Dorsolateral prefrontal cortex (tissue), 120 donors: ENCODE measurements at regions of chr12 and their contacts with region 1.

Region 1: DNA sequence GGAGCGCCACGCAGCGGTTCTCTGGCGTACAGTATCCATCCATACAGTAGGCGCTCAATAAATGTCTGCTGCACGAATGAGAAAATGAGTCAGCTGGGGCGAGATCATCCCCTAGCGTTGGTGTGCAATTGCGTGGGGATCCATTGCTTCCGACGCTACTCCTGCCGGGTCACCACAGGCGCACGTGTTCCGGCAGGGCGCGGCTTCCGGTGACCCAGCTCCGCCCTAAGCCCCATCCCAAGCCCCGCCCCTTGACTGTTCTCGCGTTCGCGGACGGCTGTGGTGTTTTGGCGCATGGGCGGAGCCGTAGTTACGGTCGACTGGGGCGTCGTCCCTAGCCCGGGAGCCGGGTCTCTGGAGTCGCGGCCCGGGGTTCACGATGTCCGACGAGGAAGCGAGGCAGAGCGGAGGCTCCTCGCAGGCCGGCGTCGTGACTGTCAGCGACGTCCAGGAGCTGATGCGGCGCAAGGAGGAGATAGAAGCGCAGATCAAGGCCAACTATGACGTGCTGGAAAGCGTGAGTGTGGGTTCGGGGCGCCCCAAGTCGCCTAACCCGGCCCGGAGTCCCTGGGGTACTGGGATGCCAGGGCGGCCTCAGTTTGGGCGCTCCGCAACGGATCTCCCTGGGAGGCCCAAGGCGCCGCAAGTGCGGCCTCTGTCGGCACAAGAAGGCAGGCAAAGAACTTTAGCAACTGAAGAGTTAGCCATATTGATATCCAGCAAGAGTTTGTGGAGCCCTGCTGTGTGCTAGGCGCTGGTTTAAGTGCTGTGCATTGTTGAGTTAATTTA is at the start of gene PSMD9:
- DNase-seq: peak; percentile 93 to 98 (median 96)
- H3K4me3 ChIP-seq: peak within 1 kb of the TSS; percentile 67 to 100 (median 91)
- H3K27ac ChIP-seq: peak within 1 kb of the TSS; percentile 73 to 99 (median 91)
- H3K27me3 ChIP-seq: no peaks in the 10 kb centered on the region
- CTCF ChIP-seq: peak; percentile 18 to 71 (median 52)
- total RNA-seq, gene PSMD9: 20.7 to 47.0 (median 32.4) TPM

Region 2: GRCh38 chr12:121697098-121697698 is 191.5 kb before region 1 on chr12:
- intact Hi-C with region 1: loop called (anchors 2 to 10 kb)
- DNase-seq: peak in 1 of 10 donors; percentile 27
- H3K4me3 ChIP-seq: peak overlapping the region in 4 of 59 donors; percentile 12 to 24 (median 16)
- H3K27ac ChIP-seq: no peak overlapping the region
- H3K27me3 ChIP-seq: peaks cover 0 to 3% (median 0%) of the 10 kb centered on the region in 45 donors
- CTCF ChIP-seq: peak; percentile 51 to 91 (median 79)

Region 3: DNA sequence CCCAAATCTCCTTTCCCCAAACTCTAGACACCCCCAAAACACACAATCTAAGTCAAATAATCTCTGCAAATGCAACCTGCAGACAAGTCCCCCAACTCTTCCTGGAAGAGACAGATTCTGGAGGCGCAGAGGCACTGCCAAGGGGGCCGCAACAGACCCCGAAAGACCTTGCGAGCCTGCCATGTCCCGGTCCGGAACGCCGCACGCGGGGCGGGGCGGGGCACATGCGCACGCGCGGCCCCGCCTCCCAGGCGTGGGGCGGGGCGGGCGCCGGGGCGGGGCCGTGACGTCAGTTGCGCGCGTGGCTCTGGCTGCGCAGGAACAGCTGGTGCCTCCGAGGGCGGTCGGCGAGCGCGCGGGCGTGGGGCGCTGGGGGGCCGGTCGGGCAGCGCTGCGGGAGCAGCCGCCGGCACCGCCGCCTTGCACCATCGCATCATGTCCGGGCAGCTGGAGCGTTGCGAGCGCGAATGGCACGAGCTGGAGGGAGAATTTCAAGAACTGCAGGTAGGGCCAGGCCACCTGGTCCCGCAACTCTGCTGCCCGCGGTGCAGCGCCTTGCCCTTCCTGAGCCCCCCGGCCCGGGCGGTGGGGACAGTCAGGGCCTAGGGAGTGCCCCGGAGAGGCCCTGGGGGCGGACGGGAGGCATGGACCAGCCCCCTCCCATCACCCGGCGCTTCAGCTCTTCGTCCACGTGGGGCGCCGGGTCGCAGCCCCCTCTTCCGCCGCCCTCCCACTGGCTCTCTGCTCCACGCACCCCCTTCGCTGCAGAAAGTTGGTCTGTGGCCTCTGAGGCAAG is 176.0 kb before region 1 on chr12 and contains the start of gene TMEM120B:
- intact Hi-C with region 1: loop called (anchors 5 to 10 kb)
- DNase-seq: peak; percentile 72 to 93 (median 85)
- H3K4me3 ChIP-seq: peak within 1 kb of the TSS; percentile 62 to 99 (median 96)
- H3K27ac ChIP-seq: peak within 1 kb of the TSS in 48 of 59 donors; percentile 16 to 88 (median 70)
- H3K27me3 ChIP-seq: no peaks in the 10 kb centered on the region
- CTCF ChIP-seq: peak in 4 of 56 donors; percentile 11 to 17 (median 13)
- total RNA-seq, gene TMEM120B: 10.0 to 30.1 (median 19.2) TPM

Region 4: GRCh38 chr12:121719926-121720414 is 168.7 kb before region 1 on chr12:
- intact Hi-C with region 1: loop called in 1 of 2 experiments (anchors 5 kb)
- DNase-seq: peak in 2 of 10 donors; percentile 50 to 63
- H3K4me3 ChIP-seq: no peak overlapping the region
- H3K27ac ChIP-seq: peak overlapping the region in 12 of 59 donors; percentile 0 to 53 (median 37)
- H3K27me3 ChIP-seq: no peaks in the 10 kb centered on the region
- CTCF ChIP-seq: no peak

Region 5: DNA sequence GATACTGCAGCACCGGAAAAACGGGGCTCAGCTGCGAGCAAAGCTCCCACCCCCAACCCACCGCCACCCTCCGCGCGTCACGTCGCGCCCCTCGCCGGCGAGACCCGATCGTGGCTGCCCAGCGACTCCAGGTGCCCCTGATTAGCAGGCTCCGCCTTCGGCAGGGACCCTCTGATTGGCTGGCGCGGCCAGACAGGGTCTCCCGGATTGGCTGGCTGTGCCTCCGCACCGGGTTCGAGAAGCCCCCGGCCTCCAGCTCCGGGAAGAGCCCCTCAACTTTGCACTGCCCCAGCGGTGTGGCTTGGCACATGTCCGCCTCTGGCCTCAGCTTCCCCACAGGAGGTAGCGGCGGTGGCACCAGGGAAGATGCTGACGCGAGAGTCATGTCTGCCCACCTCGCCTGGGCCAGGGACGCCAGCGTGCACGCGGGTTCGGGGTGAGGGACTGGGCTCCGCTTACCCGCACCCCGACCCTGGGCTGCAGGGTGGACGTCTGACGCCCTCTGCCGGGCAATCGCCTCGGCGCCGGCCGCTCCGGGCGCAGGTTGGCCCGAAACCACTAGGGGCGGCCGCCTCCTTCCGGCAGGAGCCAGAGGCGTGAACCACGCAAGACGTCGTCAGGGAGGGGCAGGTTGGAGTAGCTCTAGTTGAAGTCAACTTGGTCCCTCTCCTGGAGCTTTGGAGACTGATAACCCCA is 94.7 kb before region 1 on chr12:
- intact Hi-C with region 1: loop called (anchors 2 kb)
- DNase-seq: peak; percentile 69 to 93 (median 86)
- H3K4me3 ChIP-seq: peak overlapping the region; percentile 32 to 76 (median 61)
- H3K27ac ChIP-seq: peak overlapping the region in 54 of 59 donors; percentile 9 to 100 (median 100)
- H3K27me3 ChIP-seq: no peaks in the 10 kb centered on the region
- CTCF ChIP-seq: peak in 55 of 56 donors; percentile 77 to 100 (median 98)

Region 6: GRCh38 chr12:121811434-121812319 is 77.0 kb before region 1 on chr12:
- intact Hi-C with region 1: loop called in 1 of 2 experiments (anchors 5 kb)
- DNase-seq: peak in 4 of 10 donors; percentile 57 to 86 (median 65)
- H3K4me3 ChIP-seq: peak overlapping the region; percentile 37 to 74 (median 62)
- H3K27ac ChIP-seq: peak overlapping the region in 48 of 59 donors; percentile 2 to 84 (median 64)
- H3K27me3 ChIP-seq: no peaks in the 10 kb centered on the region
- CTCF ChIP-seq: peak; percentile 87 to 100 (median 98)

Region 7: GRCh38 chr12:121839106-121839992 is 49.3 kb before region 1 on chr12:
- intact Hi-C with region 1: loop called (anchors 5 kb)
- DNase-seq: peak; percentile 91 to 97 (median 94)
- H3K4me3 ChIP-seq: peak overlapping the region; percentile 45 to 83 (median 67)
- H3K27ac ChIP-seq: peak overlapping the region in 28 of 59 donors; percentile 1 to 76 (median 30)
- H3K27me3 ChIP-seq: no peaks in the 10 kb centered on the region
- CTCF ChIP-seq: peak in 44 of 56 donors; percentile 2 to 59 (median 33)

Region 8: DNA sequence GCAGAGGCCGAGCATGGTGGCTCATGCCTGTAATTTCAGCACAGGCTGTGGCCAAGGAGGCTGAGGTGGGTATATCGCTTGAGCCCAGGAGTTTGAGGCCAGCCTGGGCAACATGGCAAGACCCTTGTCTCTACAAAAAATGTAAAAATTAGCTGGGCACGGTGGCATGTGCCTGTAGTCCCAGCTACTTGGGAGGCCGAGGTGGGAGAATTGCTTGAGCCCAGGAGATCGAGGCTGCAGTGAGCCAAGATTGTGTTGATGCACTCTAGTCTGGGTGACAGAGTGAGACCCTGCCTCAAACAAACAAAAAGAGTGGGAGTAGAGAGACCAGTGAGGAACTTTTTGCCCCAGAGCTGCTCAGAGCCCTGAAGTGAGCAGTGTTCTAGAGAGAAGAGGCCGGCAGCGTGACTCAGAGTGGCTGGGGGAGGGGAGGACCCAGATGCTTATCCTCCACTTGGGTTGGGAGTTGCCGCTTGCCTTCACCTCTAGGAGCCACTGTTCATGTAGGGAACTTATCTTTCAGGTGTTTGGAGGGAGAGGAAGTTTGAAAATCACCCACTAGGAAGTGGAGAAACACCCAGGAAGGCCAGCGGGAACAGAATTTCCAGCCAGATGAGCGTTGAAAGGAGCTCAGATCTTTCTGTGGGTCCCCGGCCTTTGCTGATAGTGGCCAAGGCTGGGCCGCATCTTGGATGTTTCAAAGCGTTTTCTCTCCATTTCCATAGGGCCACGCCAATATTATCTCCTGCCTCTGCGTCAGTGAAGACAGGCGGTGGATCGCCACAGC is 45.0 kb after region 1 on chr12:
- intact Hi-C with region 1: no loop called
- DNase-seq: no peak
- H3K4me3 ChIP-seq: no peak overlapping the region
- H3K27ac ChIP-seq: no peak overlapping the region
- H3K27me3 ChIP-seq: no peaks in the 10 kb centered on the region
- CTCF ChIP-seq: no peak

Region 9: DNA sequence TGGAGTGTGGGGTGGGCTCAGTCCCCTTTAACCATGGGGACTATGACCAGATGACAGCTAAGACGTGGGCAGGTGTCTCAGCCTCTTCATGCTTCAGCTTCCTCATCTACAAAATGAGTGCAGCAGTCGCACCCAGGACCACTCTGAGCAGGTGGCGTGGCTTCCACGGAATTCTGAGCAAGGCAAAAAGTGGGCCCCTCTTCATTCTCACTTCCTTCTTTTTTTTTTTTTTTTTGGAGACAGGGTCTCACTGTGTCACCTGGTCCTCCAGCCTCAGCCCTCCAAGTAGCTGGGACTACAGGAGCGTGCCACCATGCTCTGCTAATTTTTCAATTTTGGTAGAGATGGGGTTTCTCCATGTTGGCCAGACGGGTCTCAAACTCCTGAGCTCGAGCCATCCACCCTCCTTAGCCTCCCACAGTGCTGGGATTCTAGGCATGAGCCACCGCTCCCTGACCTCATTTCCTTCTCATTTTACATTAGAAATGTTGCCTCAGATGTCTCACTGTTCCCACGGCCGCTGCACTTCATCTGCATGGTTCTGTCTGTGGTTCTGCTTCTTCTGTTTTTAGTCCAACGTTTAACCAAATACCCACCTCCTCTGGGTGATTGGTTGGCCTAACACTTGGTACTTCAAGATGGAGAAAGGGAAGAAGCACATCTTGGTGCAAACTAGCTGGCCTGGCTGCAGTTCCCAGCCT is 91.7 kb after region 1 on chr12:
- intact Hi-C with region 1: no loop called
- DNase-seq: peak in 1 of 10 donors; percentile 18
- H3K4me3 ChIP-seq: no peak overlapping the region
- H3K27ac ChIP-seq: no peak overlapping the region
- H3K27me3 ChIP-seq: no peaks in the 10 kb centered on the region
- CTCF ChIP-seq: no peak